ENCODE measurements at regions of chr11 and their contacts with region 1.

Region 1: GRCh38 chr11:6603287-6604080 is at the starts of genes ILK and RRP8:
- DNase-seq: peak; percentile 92 to 93
- ATAC-seq: peak; percentile 85 to 94 (median 92)
- H3K4me3 ChIP-seq: peak within 1 kb of the TSS; percentile 63 to 97 (median 82)
- H3K27ac ChIP-seq: peak within 1 kb of the TSS; percentile 93 to 99 (median 97)
- H3K4me1 ChIP-seq: peaks cover 15 to 80% (median 69%) of the 10 kb centered on the region in 9 donors
- H3K27me3 ChIP-seq: no peaks in the 10 kb centered on the region
- CTCF ChIP-seq: peak in 6 of 9 donors; percentile 13 to 64 (median 43)
- total RNA-seq, gene ILK: 150 to 247 (median 204) TPM
- total RNA-seq, gene RRP8: 12.1 to 23.3 (median 20.5) TPM

Region 2: GRCh38 chr11:6481012-6481923 is 122.2 kb before region 1 on chr11 and contains the starts of genes ARFIP2 and TIMM10B:
- intact Hi-C with region 1: loop called in 3 of 10 experiments (anchors 5 kb)
- DNase-seq: peak; percentile 98 to 99
- ATAC-seq: peak; percentile 96 to 99 (median 99)
- H3K4me3 ChIP-seq: peak within 1 kb of the TSS; percentile 68 to 90 (median 80)
- H3K27ac ChIP-seq: peak within 1 kb of the TSS; percentile 41 to 94 (median 90)
- H3K4me1 ChIP-seq: peaks cover 7 to 36% (median 27%) of the 10 kb centered on the region in 9 donors
- H3K27me3 ChIP-seq: no peaks in the 10 kb centered on the region
- CTCF ChIP-seq: no peak
- total RNA-seq, gene ARFIP2: 12.4 to 23.0 (median 14.8) TPM
- total RNA-seq, gene TIMM10B: 13.8 to 21.6 (median 17.5) TPM

Region 3: DNA sequence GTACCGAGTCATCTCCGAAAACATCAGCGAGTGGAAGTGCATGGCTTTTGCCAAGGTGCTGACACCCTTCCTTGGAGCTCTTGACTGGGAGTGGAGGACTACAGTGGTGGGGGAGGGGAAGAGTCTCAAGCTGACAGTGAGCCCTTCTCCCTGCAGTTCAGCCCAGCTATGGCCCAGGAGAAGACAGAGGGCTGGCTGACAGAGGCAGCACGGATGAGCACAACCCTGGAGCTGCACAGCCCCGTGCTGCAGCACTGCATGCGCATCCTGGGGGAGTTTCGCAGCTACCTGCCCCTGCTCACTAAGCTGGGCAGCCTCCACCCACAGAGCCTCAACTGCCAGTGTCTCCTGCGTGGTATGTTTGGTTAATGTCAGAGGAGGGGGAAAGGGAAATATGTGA is 65.0 kb before region 1 on chr11:
- intact Hi-C with region 1: loop called in 4 of 10 experiments (anchors 5 to 10 kb)
- DNase-seq: no peak
- ATAC-seq: peak in 1 of 8 donors; percentile 20
- H3K4me3 ChIP-seq: no peak overlapping the region
- H3K27ac ChIP-seq: no peak overlapping the region
- H3K4me1 ChIP-seq: no peaks in the 10 kb centered on the region
- H3K27me3 ChIP-seq: no peaks in the 10 kb centered on the region
- CTCF ChIP-seq: no peak

Region 4: DNA sequence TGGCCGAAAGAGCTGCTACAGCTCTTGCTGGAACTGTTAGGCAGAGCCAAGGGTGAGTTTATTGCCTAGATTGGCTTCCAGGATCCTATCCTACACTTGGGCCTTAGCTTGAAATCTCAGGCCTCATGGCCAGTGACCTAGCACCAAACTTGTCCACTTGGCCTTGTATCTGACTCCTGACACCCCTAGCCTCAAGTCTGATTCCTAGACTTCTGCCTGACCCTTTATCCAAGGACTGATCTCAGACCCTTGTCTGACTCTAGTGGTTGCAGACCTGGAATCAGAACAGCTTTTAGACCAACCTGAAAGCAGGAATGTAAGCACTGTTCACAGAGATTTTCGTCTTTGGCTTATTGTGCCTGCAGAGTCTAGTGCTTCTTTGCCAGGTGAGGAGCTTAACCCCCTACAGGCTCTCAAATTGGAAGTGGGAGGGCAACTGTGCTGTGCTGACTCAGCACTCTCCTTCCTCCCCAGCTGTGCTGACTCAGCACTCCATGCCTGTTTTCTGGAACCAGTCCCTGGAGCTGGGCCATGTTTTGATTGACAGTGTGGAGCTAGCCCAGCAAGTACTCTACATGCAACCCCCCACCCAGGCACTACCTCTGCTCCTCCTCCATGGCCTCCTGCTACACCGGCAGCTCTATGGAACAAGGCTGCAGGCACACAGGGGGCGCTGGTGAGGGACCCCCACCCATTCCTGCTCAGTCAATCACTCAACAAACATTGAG is 35.1 kb before region 1 on chr11:
- intact Hi-C with region 1: loop called in 1 of 10 experiments (anchors 1 kb)
- DNase-seq: peak in 1 of 2 donors; percentile 66
- ATAC-seq: peak; percentile 33 to 69 (median 57)
- H3K4me3 ChIP-seq: no peak overlapping the region
- H3K27ac ChIP-seq: no peak overlapping the region
- H3K4me1 ChIP-seq: peaks cover 0 to 27% (median 11%) of the 10 kb centered on the region in 9 donors
- H3K27me3 ChIP-seq: no peaks in the 10 kb centered on the region
- CTCF ChIP-seq: no peak

Region 5: GRCh38 chr11:6682936-6683861 is 79.7 kb after region 1 on chr11 and contains the start of gene MRPL17:
- intact Hi-C with region 1: loop called in 5 of 10 experiments (anchors 1 to 5 kb)
- DNase-seq: peak; percentile 99 to 100
- ATAC-seq: peak; percentile 97 to 99 (median 98)
- H3K4me3 ChIP-seq: peak within 1 kb of the TSS; percentile 67 to 94 (median 82)
- H3K27ac ChIP-seq: peak within 1 kb of the TSS; percentile 52 to 97 (median 91)
- H3K4me1 ChIP-seq: peaks cover 5 to 36% (median 27%) of the 10 kb centered on the region in 9 donors
- H3K27me3 ChIP-seq: no peaks in the 10 kb centered on the region
- CTCF ChIP-seq: peak; percentile 78 to 99 (median 93)
- total RNA-seq, gene MRPL17: 36.7 to 61.4 (median 45.5) TPM

Region 6: DNA sequence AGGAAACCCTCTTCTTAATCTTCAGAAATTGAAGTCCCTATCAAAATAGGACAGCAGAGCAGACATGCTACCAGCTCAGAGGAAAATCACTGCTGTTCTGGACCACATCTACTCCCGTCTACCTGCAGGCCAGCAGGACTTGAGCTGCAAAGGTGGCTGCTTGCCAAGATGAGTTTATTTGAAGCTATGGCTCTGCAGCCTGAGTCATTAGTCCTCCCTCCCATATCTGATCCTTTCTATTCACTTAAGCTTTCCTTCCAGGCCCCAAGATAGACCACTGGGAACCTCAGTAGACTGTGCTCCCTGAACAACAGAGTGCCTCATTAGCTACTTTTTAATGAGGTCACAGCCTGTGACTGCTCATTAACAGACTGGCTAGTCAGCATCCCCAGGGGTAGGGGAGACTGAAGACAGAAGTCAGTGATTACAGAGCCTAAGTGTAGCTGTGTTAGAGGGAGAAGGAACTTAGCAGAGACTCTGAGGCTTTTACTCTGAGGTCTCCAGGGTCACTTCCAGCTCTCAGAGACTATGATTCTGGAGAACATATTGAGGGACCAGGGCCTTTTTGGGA is 252.6 kb after region 1 on chr11:
- intact Hi-C with region 1: no loop called
- DNase-seq: no peak
- ATAC-seq: no peak
- H3K4me3 ChIP-seq: no peak overlapping the region
- H3K27ac ChIP-seq: no peak overlapping the region
- H3K4me1 ChIP-seq: no peaks in the 10 kb centered on the region
- H3K27me3 ChIP-seq: no peaks in the 10 kb centered on the region
- CTCF ChIP-seq: no peak

Measured in heart right ventricle (tissue), 16 donors.